ENCODE measurements at regions of chr14 and their contacts with region 1.

Region 1: GRCh38 chr14:61475316-61475715 is 153.9 kb downstream of the PRKCH start:
- DNase-seq: no peak
- ATAC-seq: no peak
- H3K4me3 ChIP-seq: no peak overlapping the region
- H3K27ac ChIP-seq: peak overlapping the region in 11 of 12 donors; percentile 72 to 99 (median 90)
- H3K4me1 ChIP-seq: peaks cover 28 to 99% (median 81%) of the 10 kb centered on the region in 12 donors
- H3K27me3 ChIP-seq: no peaks in the 10 kb centered on the region
- CTCF ChIP-seq: peak; percentile 61 to 81 (median 76)
- POLR2A ChIP-seq: no peak

Region 2: GRCh38 chr14:61512026-61512834 is 36.9 kb after region 1 on chr14:
- intact Hi-C with region 1: loop called in 3 of 10 experiments (anchors 5 kb)
- DNase-seq: no peak
- ATAC-seq: peak in 2 of 4 donors; percentile 37 to 38
- H3K4me3 ChIP-seq: no peak overlapping the region
- H3K27ac ChIP-seq: peak overlapping the region in 3 of 12 donors; percentile 21 to 38 (median 22)
- H3K4me1 ChIP-seq: peaks cover 7 to 78% (median 24%) of the 10 kb centered on the region in 12 donors
- H3K27me3 ChIP-seq: no peaks in the 10 kb centered on the region
- CTCF ChIP-seq: no peak
- POLR2A ChIP-seq: no peak

Region 3: GRCh38 chr14:61537563-61538463 is 62.5 kb after region 1 on chr14:
- intact Hi-C with region 1: loop called in 3 of 10 experiments (anchors 5 to 10 kb)
- DNase-seq: no peak
- ATAC-seq: peak; percentile 27 to 65 (median 45)
- H3K4me3 ChIP-seq: no peak overlapping the region
- H3K27ac ChIP-seq: peak overlapping the region in 8 of 12 donors; percentile 7 to 59 (median 25)
- H3K4me1 ChIP-seq: peaks cover 7 to 70% (median 29%) of the 10 kb centered on the region in 12 donors
- H3K27me3 ChIP-seq: no peaks in the 10 kb centered on the region
- CTCF ChIP-seq: no peak
- POLR2A ChIP-seq: no peak

Region 4: GRCh38 chr14:61561657-61562276 is 86.5 kb after region 1 on chr14:
- intact Hi-C with region 1: loop called in 6 of 10 experiments (anchors 5 to 10 kb)
- DNase-seq: peak; percentile 66 to 87 (median 73)
- ATAC-seq: peak; percentile 52 to 90 (median 80)
- H3K4me3 ChIP-seq: no peak overlapping the region
- H3K27ac ChIP-seq: peak overlapping the region; percentile 31 to 94 (median 76)
- H3K4me1 ChIP-seq: peaks cover 2 to 67% (median 32%) of the 10 kb centered on the region in 12 donors
- H3K27me3 ChIP-seq: no peaks in the 10 kb centered on the region
- CTCF ChIP-seq: peak in 1 of 12 donors; percentile 7
- POLR2A ChIP-seq: no peak

Region 5: DNA sequence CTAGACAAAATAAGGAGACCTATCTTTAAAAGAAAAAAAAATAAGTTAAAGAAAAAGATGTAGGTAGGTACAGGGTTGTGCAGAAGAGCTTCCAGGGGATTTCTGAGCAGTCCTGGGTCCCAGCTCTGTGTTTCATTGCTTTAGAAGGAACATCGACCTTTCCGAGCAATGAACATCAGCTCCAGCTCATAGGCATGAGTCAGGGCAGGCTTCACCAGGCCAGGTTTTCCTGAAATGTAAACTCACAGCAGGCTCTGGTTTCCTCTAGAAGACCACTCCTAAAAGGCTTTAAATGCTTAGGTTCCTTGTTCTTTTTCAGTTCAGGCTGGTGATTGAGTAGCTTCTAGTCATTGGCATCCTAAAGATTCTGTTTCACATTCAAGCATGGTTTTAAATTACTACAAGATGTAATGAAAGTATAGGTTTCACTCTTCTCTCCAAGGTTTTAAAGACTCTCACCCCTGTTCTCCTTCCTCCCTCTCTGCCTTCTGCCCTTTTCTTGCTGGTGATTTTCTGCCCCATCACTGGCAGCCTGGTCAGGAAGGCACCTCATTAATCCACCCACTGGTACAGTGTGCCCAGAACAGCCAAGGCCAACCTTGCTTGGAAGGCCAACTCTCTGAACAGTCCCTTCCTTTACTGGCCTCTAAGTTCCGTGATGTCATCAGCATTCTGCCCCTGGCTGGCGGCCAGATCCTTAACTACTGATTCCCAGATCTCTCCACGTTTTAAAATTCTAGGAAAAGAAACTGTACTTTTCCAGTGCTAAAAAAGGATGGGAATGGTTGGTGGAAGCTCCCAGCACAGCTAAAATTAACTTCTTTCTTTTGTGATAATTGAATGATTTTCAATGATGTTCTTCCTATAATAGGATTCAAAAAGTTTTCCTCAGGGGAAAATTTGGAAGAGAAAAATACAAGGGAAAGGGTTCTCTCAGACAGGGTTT is 110.6 kb after region 1 on chr14:
- intact Hi-C with region 1: loop called in 2 of 10 experiments (anchors 2 to 5 kb)
- DNase-seq: peak; percentile 78 to 84 (median 81)
- ATAC-seq: peak; percentile 83 to 89 (median 86)
- H3K4me3 ChIP-seq: no peak overlapping the region
- H3K27ac ChIP-seq: peak overlapping the region; percentile 49 to 88 (median 65)
- H3K4me1 ChIP-seq: peaks cover 8 to 71% (median 32%) of the 10 kb centered on the region in 12 donors
- H3K27me3 ChIP-seq: no peaks in the 10 kb centered on the region
- CTCF ChIP-seq: no peak
- POLR2A ChIP-seq: no peak

Region 6: DNA sequence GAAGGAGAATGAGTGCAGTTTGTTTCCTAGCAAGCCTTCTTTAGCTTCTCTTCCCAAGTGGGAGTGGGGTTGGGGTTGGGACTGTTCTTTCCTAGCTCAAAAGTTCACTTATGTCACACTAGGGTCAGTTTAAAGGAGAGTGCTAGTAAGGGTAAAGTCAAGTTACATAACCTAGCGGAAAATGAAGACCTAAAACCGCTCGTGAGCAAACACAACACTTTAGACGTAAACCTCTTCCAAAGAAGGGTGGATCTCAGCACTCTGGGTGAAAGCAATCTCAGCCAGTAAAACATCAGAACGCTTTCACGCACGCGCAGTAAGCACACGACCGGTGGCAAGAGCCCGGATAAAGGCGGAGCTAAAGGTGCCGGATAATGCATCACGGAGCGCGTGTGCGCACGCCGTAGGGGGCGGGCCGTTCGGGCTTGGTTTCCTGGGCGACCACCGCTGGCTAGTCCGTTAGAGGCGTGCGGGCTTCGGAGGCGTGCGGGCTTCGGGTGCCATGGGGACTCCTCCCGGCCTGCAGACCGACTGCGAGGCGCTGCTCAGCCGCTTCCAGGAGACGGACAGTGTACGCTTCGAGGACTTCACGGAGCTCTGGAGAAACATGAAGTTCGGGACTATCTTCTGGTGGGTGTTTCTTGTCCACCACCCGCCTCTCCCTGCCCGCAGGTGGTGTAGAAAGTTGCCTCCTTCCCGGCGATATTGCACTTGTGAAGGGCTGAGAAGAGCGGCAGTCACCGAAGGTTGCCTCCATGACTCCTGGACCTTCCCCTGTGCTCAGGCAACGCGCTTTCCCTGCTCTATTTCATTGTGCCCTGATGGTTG is 286.9 kb after region 1 on chr14 and contains the start of gene SNAPC1:
- intact Hi-C with region 1: loop called in 1 of 10 experiments (anchors 10 kb)
- DNase-seq: peak; percentile 97 to 99 (median 98)
- ATAC-seq: peak; percentile 99 to 100 (median 99)
- H3K4me3 ChIP-seq: peak within 1 kb of the TSS; percentile 29 to 90 (median 80)
- H3K27ac ChIP-seq: peak within 1 kb of the TSS; percentile 78 to 97 (median 93)
- H3K4me1 ChIP-seq: peaks cover 0 to 39% (median 18%) of the 10 kb centered on the region in 12 donors
- H3K27me3 ChIP-seq: no peaks in the 10 kb centered on the region
- CTCF ChIP-seq: no peak
- POLR2A ChIP-seq: peak; percentile 77 to 92
- total RNA-seq, gene SNAPC1: 5.9 to 9.0 (median 7.2) TPM

Measured in heart left ventricle (tissue), 16 donors.